ENCODE measurements at regions of chr11 and their contacts with region 1.

Region 1: GRCh38 chr11:69699213-69699612 is 4.6 kb downstream of the FGF19 start:
- DNase-seq: peak; percentile 72
- H3K4me3 ChIP-seq: no peak overlapping the region
- H3K27ac ChIP-seq: no peak overlapping the region
- H3K4me1 ChIP-seq: no peaks in the 10 kb centered on the region
- H3K27me3 ChIP-seq: no peaks in the 10 kb centered on the region
- CTCF ChIP-seq: no peak
- POLR2A ChIP-seq: no peak

Region 2: DNA sequence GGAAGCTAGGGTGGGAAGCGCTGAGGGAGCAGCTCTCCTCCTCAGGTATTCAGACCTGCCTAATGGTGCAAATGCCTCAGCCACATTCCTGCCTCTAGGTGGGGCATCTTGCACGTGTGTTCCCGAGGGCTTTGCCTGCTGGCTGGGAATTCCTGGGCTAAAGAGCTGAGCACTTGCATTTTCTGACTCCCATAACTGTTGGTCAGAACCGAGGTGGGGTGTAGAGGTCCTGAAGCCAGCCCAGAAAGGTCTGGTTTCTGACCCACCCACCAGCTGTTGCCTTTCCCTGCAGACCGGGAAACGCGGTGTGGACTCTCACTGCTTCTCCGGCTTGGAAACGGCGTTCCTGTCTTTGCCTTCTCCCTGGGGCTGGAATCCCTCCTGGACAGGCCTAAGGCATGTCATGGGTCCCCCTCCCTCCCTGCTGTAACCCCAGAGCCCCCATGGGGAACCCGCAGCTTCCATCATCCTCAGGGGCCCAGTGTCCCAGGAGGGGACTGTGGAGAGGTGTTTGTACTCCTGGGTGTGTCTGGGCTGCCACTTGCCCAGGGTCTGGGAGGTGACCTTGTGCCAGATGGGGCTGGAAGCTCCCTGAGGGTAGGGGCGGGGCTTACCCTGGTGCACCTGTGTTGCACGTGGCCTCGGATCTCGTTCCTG is 567.4 kb before region 1 on chr11:
- intact Hi-C with region 1: no loop called
- DNase-seq: peak; percentile 85
- H3K4me3 ChIP-seq: no peak overlapping the region
- H3K27ac ChIP-seq: peak overlapping the region in 1 of 2 donors; percentile 36
- H3K4me1 ChIP-seq: peaks cover 17% of the 10 kb centered on the region
- H3K27me3 ChIP-seq: no peaks in the 10 kb centered on the region
- CTCF ChIP-seq: peak; percentile 73 to 87 (median 87)
- POLR2A ChIP-seq: no peak

Region 3: DNA sequence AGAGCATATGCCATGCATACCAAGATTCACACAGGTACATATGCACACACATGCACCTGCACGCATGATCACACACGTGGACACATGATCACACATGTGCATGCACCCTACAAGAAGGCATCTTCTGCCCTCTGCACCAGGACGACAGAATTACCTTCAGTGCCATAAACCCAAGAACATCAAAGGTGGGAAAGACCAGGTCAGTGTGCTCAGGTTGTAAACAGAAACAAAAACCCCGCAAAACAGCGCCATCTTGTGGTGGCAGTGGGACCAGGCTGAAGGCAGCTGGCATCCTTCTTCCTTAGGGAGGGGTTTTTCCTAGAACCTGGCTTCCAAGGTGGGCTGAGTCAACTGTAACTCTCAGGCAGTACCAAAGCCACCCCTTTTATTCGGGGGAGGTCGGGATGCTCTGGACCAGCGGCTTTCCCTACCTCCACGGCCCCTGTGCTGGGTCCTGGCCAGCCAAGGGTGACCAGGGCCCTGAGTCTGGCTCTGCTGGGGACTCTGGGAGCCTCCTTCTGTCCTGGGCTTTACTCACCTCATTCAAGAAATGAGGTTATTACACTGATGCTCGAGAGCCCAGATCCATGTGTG is 189.4 kb after region 1 on chr11:
- intact Hi-C with region 1: loop called (anchors 10 kb)
- DNase-seq: peak; percentile 78
- H3K4me3 ChIP-seq: no peak overlapping the region
- H3K27ac ChIP-seq: no peak overlapping the region
- H3K4me1 ChIP-seq: peaks cover 3% of the 10 kb centered on the region
- H3K27me3 ChIP-seq: no peaks in the 10 kb centered on the region
- CTCF ChIP-seq: peak; percentile 60 to 92 (median 73)
- POLR2A ChIP-seq: no peak

Measured in testis (tissue), 5 donors.